Posterior vena cava (tissue), 2 donors: ENCODE measurements at regions of chr20 and their contacts with region 1.

Region 1: DNA sequence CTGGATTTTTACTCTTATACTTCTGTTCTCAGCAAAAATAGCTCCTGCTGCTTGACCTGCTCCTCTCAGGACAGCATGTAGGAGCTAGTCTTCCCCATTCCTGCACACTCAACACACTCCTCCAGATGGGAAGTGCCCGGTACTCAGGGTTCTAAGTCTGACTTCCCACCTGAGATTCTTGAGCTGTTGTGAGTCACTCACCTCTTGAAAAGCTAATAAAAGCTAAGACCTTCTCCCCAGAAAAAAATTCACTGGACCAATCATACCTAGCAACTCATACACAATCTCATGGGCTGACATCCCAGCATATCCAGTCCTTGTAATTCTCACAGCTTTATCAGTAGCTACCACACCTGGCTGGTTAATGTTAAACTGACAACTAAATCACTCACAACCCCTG is 53.5 kb downstream of the TRPC4AP start:
- DNase-seq: no peak

Region 2: GRCh38 chr20:35085477-35086225 is 46.5 kb after region 1 on chr20:
- intact Hi-C with region 1: loop called in 1 of 2 experiments (anchors 2 kb)
- DNase-seq: no peak

Region 3: DNA sequence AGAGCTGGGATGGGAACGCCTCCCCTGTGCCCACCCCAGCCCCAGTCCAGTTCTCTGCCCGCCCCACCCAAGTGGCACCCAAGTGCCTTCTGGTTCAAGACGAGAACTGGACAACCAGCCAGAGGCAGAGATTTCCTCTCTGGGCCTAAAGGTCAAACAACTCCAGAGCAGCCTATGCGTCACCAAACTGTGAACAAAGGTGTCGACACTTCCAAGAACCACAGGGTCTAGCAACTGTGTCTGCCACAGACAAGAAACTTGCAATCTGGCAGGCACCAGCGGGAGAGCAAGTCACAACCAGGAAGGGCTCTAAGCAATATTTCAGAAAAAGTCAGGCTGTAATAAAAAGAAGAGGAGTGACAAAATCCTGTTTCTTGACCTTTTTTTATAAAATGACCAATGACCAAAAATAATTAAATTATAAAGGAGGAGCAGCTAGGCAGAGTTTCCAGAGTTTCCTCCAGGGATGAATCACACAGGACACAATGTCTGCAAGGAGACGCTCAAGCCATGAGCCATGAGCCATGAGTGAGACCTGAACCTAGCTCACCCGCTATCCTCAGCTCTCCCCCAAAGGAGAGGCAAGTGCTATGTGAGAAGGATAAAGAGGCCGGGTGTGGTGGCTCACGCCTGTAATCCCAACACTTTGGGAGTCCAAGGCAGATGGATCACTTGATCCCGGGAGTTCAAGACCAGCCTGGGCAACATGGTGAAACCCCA is 96.9 kb after region 1 on chr20:
- intact Hi-C with region 1: no loop called
- DNase-seq: peak; percentile 91